ENCODE measurements at regions of chr1 and their contacts with region 1.

Region 1: GRCh38 chr1:206912445-206913095 is 9.2 kb downstream of the FCMR start:
- DNase-seq: peak; percentile 70
- CTCF ChIP-seq: peak; percentile 76

Region 2: DNA sequence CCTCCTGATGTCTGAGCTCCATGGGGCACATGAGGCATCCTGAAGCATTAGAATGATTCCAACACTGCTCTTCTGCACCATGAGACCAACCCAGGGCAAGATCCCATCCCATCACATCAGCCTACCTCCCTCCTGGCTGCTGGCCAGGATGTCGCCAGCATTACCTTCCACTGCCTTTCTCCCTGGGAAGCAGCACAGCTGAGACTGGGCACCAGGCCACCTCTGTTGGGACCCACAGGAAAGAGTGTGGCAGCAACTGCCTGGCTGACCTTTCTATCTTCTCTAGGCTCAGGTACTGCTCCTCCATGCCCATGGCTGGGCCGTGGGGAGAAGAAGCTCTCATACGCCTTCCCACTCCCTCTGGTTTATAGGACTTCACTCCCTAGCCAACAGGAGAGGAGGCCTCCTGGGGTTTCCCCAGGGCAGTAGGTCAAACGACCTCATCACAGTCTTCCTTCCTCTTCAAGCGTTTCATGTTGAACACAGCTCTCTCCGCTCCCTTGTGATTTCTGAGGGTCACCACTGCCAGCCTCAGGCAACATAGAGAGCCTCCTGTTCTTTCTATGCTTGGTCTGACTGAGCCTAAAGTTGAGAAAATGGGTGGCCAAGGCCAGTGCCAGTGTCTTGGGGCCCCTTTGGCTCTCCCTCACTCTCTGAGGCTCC is 416.3 kb before region 1 on chr1:
- CTCF ChIA-PET with region 1: interaction called, 11 read pairs
- POLR2A ChIA-PET with region 1: no interaction called
- DNase-seq: peak; percentile 75
- CTCF ChIP-seq: no peak

Region 3: GRCh38 chr1:206716870-206717673 is 195.5 kb before region 1 on chr1:
- CTCF ChIA-PET with region 1: interaction called, 68 read pairs
- POLR2A ChIA-PET with region 1: no interaction called
- DNase-seq: peak; percentile 51
- CTCF ChIP-seq: no peak

Region 4: GRCh38 chr1:206808615-206809014 is 104.0 kb before region 1 on chr1:
- CTCF ChIA-PET with region 1: interaction called, 33 read pairs
- POLR2A ChIA-PET with region 1: no interaction called
- DNase-seq: no peak
- CTCF ChIP-seq: peak; percentile 76

Region 5: DNA sequence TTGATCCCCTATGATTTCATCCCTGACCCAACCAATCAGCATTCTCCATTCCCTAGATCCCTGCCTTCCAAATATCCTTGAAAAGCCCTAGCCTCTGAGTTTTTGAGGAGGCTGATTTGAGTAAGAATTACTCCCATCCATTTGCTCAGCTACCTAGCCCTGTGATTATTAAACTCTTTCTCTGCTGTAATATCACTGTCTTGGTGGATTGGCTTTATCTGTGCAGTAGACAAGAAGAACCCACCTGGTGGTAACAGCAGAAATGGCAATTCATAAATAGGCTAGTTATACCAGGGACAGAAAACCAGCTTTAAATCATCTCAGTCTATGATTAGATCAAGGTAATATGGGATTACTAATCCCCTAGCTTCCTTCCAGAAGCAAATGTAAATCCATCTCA is 34.1 kb before region 1 on chr1:
- CTCF ChIA-PET with region 1: interaction called, 23 read pairs
- POLR2A ChIA-PET with region 1: interaction called, 7 read pairs
- DNase-seq: no peak
- CTCF ChIP-seq: no peak

Region 6: DNA sequence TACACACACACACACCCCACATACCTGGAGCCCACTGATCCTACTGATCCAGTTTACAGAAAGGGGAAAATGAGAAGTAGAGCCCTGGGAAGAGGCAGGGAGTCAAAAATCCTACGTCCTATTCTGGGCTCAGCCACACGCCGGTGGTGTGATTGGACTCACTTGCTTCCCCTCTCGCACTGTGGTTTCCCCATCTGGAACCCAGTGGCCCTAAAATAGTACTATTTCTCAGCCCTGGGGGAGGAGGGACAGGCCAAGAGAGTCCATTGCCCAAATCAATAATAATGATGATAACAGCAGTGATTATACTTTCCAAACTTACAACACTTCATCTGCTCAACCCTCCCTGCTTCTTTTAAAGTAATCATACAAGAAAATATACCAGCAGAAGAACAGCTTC is 36.6 kb after region 1 on chr1:
- CTCF ChIA-PET with region 1: interaction called, 20 read pairs
- POLR2A ChIA-PET with region 1: no interaction called
- DNase-seq: no peak
- CTCF ChIP-seq: no peak

Region 7: GRCh38 chr1:206982216-206982615 is 69.6 kb after region 1 on chr1:
- CTCF ChIA-PET with region 1: interaction called, 68 read pairs
- POLR2A ChIA-PET with region 1: no interaction called
- DNase-seq: peak; percentile 77
- CTCF ChIP-seq: peak; percentile 85